ENCODE measurements at regions of chr7 and their contacts with region 1.

Region 1: DNA sequence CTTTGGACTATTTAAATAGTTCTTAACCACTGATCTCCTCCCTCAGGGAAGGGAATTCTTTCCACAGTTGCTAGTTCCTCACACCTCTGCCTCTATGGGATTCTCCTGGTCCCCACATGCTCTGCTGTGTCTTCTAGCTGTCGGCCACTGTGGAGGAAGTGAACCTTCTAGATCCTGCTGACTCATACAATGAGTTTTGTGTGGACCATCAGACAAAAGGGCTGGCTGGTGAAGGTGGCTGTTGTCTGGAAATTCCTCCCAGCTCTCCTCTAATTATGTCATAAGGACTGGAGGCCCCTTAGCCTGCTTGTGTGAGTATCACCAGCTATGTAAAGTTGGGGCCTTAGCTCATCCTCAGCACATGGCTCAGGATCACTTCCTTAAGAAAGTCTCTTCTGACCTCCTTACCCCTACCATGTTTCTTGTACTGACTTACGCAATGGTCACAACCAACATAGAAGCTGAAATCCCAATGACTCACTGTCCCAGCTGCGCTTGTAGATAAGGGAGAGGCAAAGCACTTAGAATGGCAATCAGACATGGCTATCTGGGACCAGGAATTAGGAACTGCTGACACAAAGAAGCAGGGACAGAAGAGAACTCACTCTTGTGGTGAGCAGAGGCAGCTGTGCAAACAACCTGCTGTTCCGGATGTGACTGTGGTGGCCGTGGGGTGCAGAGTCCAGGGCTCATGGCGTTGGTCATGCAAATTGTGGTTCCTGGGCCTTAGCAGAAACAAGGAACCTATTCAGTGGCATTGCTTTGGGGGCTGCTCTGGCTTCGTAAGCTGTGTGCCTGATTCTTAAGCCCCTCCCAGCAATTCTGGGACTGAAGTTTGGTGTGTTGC is 2.5 kb upstream of the MACC1 start:
- DNase-seq: peak; percentile 93
- ATAC-seq: peak; percentile 77
- H3K4me3 ChIP-seq: peak overlapping the region in 4 of 5 experiments; percentile 15 to 55 (median 26)
- H3K4me3 Mint-ChIP-seq: peak overlapping the region; percentile 80
- H3K27ac ChIP-seq: peak overlapping the region; percentile 88
- H3K27ac Mint-ChIP-seq: peak overlapping the region; percentile 94
- H3K4me1 ChIP-seq: peaks cover 45 to 53% of the 10 kb centered on the region in 2 donors
- H3K4me1 Mint-ChIP-seq: peaks cover 61% of the 10 kb centered on the region
- H3K27me3 ChIP-seq: no peaks in the 10 kb centered on the region
- H3K27me3 Mint-ChIP-seq: no peaks in the 10 kb centered on the region
- CTCF ChIP-seq: no peak

Region 2: DNA sequence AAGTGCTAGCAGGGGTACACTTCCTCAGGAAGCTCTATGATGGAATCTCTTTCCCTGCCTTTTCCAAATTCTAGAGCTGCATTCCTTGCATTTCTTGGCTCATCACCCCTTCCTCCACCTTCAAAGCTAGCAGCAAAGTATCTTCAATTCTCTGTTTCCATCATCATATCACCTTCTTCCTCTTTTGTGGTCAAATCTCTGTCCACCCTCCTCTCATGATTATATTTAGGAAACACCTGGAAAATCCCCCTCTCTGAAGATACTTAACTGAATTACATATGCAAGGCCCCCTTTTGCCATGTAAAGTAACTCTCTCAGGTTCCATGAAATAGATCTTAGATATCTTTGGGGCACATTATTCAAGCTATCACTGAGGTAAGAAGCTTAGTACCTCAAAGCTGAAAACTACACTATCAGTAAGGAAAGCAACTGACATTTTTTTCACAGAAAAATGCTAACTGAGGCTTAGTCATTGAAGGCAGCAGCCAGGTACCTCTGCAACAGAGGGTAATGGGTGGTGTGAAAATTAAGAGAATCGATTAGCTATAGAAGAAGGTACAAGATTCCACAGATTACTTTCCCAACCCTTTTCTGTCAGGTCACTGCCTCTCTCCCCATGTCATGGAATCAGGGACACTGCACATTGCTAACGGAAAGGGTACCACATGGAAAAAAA is 199.8 kb before region 1 on chr7:
- CTCF ChIA-PET with region 1: no interaction called
- POLR2A ChIA-PET with region 1: no interaction called
- intact Hi-C with region 1: loop called (anchors 10 kb)
- DNase-seq: peak; percentile 39
- ATAC-seq: peak; percentile 17
- H3K4me3 ChIP-seq: no peak overlapping the region
- H3K4me3 Mint-ChIP-seq: peak overlapping the region; percentile 14
- H3K27ac ChIP-seq: no peak overlapping the region
- H3K27ac Mint-ChIP-seq: peak overlapping the region; percentile 11
- H3K4me1 ChIP-seq: peaks cover 23 to 25% of the 10 kb centered on the region in 2 donors
- H3K4me1 Mint-ChIP-seq: peaks cover 33% of the 10 kb centered on the region
- H3K27me3 ChIP-seq: no peaks in the 10 kb centered on the region
- H3K27me3 Mint-ChIP-seq: no peaks in the 10 kb centered on the region
- CTCF ChIP-seq: no peak

Region 3: DNA sequence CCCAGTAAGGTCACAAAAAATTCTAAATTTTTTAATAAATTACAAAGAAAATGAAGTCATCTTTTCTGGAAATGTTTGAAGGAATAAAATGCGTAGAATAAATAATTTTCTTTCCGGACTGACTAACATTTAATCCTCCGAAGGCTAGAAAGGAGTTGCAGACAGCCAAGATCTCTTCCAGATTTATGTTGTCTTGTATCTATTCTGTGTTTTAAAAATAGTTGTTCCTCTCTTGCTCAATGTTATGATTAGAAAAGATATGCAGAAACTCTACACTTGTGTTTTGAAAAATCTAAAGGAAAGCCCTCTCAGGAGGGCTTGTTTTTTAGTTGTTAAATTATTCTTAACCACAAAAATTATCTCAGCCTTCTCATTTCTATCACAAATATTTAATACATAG is 73.2 kb before region 1 on chr7:
- CTCF ChIA-PET with region 1: no interaction called
- POLR2A ChIA-PET with region 1: no interaction called
- intact Hi-C with region 1: no loop called
- DNase-seq: no peak
- ATAC-seq: no peak
- H3K4me3 ChIP-seq: no peak overlapping the region
- H3K4me3 Mint-ChIP-seq: no peak overlapping the region
- H3K27ac ChIP-seq: no peak overlapping the region
- H3K27ac Mint-ChIP-seq: no peak overlapping the region
- H3K4me1 ChIP-seq: peaks cover 6 to 9% of the 10 kb centered on the region in 2 donors
- H3K4me1 Mint-ChIP-seq: peaks cover 5% of the 10 kb centered on the region
- H3K27me3 ChIP-seq: no peaks in the 10 kb centered on the region
- H3K27me3 Mint-ChIP-seq: no peaks in the 10 kb centered on the region
- CTCF ChIP-seq: no peak

Region 4: GRCh38 chr7:20158684-20159083 is 61.0 kb before region 1 on chr7:
- CTCF ChIA-PET with region 1: interaction called, 10 read pairs
- POLR2A ChIA-PET with region 1: interaction called, 8 read pairs
- intact Hi-C with region 1: no loop called
- DNase-seq: peak; percentile 42
- ATAC-seq: peak; percentile 28
- H3K4me3 ChIP-seq: no peak overlapping the region
- H3K4me3 Mint-ChIP-seq: no peak overlapping the region
- H3K27ac ChIP-seq: no peak overlapping the region
- H3K27ac Mint-ChIP-seq: no peak overlapping the region
- H3K4me1 ChIP-seq: no peaks in the 10 kb centered on the region
- H3K4me1 Mint-ChIP-seq: peaks cover 5% of the 10 kb centered on the region
- H3K27me3 ChIP-seq: no peaks in the 10 kb centered on the region
- H3K27me3 Mint-ChIP-seq: no peaks in the 10 kb centered on the region
- CTCF ChIP-seq: peak; percentile 29

Region 5: DNA sequence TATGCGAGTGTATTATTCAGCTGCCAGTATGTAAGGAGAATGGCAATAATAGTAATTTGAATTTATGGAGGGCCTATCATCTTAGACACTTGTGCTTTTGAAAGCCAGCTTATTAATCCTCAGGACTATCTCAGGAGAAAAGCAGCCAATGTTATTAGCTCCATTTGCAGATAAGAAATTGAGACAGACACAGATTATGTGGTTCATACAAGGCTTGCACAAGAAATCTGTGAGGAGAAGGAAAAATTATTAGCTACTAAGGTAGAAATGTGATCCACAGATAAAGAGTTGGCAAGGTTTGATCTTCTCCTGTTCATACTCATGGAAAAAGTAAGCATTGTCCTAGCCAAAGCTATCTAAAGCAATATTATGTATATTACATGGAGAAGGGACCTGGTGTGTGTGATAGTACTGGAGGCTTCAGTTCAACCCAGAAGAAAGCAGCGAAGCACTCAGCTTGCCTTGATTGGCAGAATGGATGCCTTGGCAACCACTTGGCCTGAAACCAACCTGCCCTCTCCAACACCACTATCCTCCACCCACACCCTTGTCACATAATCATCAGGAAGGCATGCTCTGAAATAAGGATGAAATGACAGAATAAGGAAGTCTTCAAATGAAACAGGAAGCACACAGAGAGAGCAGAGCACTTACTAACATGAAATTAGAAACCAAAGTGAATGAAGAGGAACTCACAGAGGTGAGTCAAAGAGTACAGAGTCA is 20.5 kb before region 1 on chr7:
- CTCF ChIA-PET with region 1: interaction called, 7 read pairs
- POLR2A ChIA-PET with region 1: interaction called, 4 read pairs
- intact Hi-C with region 1: loop called (anchors 1 kb)
- DNase-seq: peak; percentile 87
- ATAC-seq: peak; percentile 72
- H3K4me3 ChIP-seq: peak overlapping the region in 1 of 5 experiments; percentile 20
- H3K4me3 Mint-ChIP-seq: peak overlapping the region; percentile 73
- H3K27ac ChIP-seq: peak overlapping the region; percentile 86 to 91
- H3K27ac Mint-ChIP-seq: peak overlapping the region; percentile 92
- H3K4me1 ChIP-seq: peaks cover 32 to 33% of the 10 kb centered on the region in 2 donors
- H3K4me1 Mint-ChIP-seq: peaks cover 41% of the 10 kb centered on the region
- H3K27me3 ChIP-seq: no peaks in the 10 kb centered on the region
- H3K27me3 Mint-ChIP-seq: no peaks in the 10 kb centered on the region
- CTCF ChIP-seq: no peak

Region 6: GRCh38 chr7:20330240-20330927 is 110.7 kb after region 1 on chr7 and contains the start of gene ITGB8:
- CTCF ChIA-PET with region 1: interaction called, 3 read pairs
- POLR2A ChIA-PET with region 1: no interaction called
- intact Hi-C with region 1: loop called (anchors 1 kb)
- DNase-seq: peak; percentile 72
- ATAC-seq: peak; percentile 68
- H3K4me3 ChIP-seq: peak within 1 kb of the TSS; percentile 46 to 74 (median 70)
- H3K4me3 Mint-ChIP-seq: peak within 1 kb of the TSS; percentile 99
- H3K27ac ChIP-seq: no peak within 1 kb of the TSS
- H3K27ac Mint-ChIP-seq: peak within 1 kb of the TSS; percentile 86
- H3K4me1 ChIP-seq: peaks cover 14 to 21% of the 10 kb centered on the region in 2 donors
- H3K4me1 Mint-ChIP-seq: peaks cover 19% of the 10 kb centered on the region
- H3K27me3 ChIP-seq: peaks cover 0 to 17% (median 14%) of the 10 kb centered on the region in 4 experiments
- H3K27me3 Mint-ChIP-seq: peaks cover 21% of the 10 kb centered on the region
- CTCF ChIP-seq: no peak
- total RNA-seq, gene ITGB8: 0.30 and 0.32 TPM in 2 replicates

Region 7: DNA sequence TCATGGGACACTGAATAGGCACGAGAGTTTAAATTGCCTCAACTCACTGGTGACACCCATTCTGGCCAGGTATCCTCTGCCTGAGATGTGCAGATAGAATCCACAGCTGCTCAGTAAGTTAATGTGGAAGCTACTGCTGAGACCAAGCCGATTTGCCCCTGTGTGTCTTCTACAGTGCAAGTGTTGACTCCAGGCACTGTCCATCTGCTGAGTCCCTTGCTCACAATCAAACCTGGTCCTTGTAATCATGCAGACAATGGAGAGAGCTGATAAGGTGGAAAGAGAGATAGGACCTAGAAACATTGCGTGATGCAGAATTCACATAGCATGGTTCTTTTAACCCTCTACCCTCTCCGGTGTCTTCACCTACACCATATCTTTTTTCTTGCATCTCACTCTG is 212.4 kb after region 1 on chr7:
- CTCF ChIA-PET with region 1: no interaction called
- POLR2A ChIA-PET with region 1: no interaction called
- intact Hi-C with region 1: no loop called
- DNase-seq: no peak
- ATAC-seq: no peak
- H3K4me3 ChIP-seq: no peak overlapping the region
- H3K4me3 Mint-ChIP-seq: no peak overlapping the region
- H3K27ac ChIP-seq: no peak overlapping the region
- H3K27ac Mint-ChIP-seq: no peak overlapping the region
- H3K4me1 ChIP-seq: no peaks in the 10 kb centered on the region
- H3K4me1 Mint-ChIP-seq: peaks cover under 1% of the 10 kb centered on the region
- H3K27me3 ChIP-seq: peaks cover 0 to 5% (median 0%) of the 10 kb centered on the region in 4 experiments
- H3K27me3 Mint-ChIP-seq: peaks cover 18% of the 10 kb centered on the region
- CTCF ChIP-seq: no peak